CD8-positive, alpha-beta T cell (primary cell): ENCODE measurements at regions of chr12 and their contacts with region 1.

Region 1: DNA sequence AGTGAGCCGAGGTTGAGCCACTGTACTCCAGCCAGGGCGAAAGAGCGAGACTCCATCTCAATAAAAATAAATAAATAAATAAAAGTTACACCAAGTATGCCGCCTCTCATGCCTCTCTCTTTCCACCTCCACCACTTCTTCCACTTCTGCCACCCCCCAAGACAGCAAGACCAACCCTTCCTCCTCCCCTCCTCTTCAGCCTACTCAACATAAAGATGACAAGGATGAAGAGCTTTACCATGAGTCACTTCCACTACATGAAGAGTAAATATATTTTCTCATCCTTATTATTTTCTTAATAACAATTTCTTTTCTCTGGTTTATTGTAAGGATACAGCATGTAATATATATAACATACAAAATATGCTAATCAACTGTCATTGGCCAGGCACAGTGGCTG is 3.6 kb upstream of the TMED2 start:
- DNase-seq: no peak
- ATAC-seq: no peak
- H3K4me3 ChIP-seq: no peak overlapping the region
- H3K4me3 Mint-ChIP-seq: no peak overlapping the region
- H3K27ac ChIP-seq: no peak overlapping the region
- H3K27ac Mint-ChIP-seq: no peak overlapping the region
- H3K4me1 ChIP-seq: peaks cover 22% of the 10 kb centered on the region
- H3K4me1 Mint-ChIP-seq: peaks cover 28% of the 10 kb centered on the region
- H3K27me3 ChIP-seq: no peaks in the 10 kb centered on the region
- H3K27me3 Mint-ChIP-seq: no peaks in the 10 kb centered on the region
- CTCF ChIP-seq: no peak

Region 2: GRCh38 chr12:123264681-123265438 is 315.9 kb before region 1 on chr12:
- CTCF ChIA-PET with region 1: interaction called, 14 read pairs
- POLR2A ChIA-PET with region 1: interaction called, 5 read pairs
- intact Hi-C with region 1: loop called in 1 of 2 experiments (anchors 1 kb)
- DNase-seq: peak in 2 of 9 experiments; percentile 29 to 33
- ATAC-seq: no peak
- H3K4me3 ChIP-seq: no peak overlapping the region
- H3K4me3 Mint-ChIP-seq: no peak overlapping the region
- H3K27ac ChIP-seq: no peak overlapping the region
- H3K27ac Mint-ChIP-seq: no peak overlapping the region
- H3K4me1 ChIP-seq: peaks cover 12% of the 10 kb centered on the region
- H3K4me1 Mint-ChIP-seq: peaks cover 19% of the 10 kb centered on the region
- H3K27me3 ChIP-seq: no peaks in the 10 kb centered on the region
- H3K27me3 Mint-ChIP-seq: no peaks in the 10 kb centered on the region
- CTCF ChIP-seq: no peak

Region 3: GRCh38 chr12:123382684-123383083 is 198.1 kb before region 1 on chr12:
- CTCF ChIA-PET with region 1: interaction called, 3 read pairs
- POLR2A ChIA-PET with region 1: interaction called, 4 read pairs
- intact Hi-C with region 1: loop called in 1 of 2 experiments (anchors 1 kb)
- DNase-seq: no peak
- ATAC-seq: no peak
- H3K4me3 ChIP-seq: no peak overlapping the region
- H3K4me3 Mint-ChIP-seq: peak overlapping the region; percentile 49
- H3K27ac ChIP-seq: no peak overlapping the region
- H3K27ac Mint-ChIP-seq: no peak overlapping the region
- H3K4me1 ChIP-seq: peaks cover 10% of the 10 kb centered on the region
- H3K4me1 Mint-ChIP-seq: peaks cover 12% of the 10 kb centered on the region
- H3K27me3 ChIP-seq: no peaks in the 10 kb centered on the region
- H3K27me3 Mint-ChIP-seq: no peaks in the 10 kb centered on the region
- CTCF ChIP-seq: no peak

Region 4: GRCh38 chr12:123436017-123436964 is 144.5 kb before region 1 on chr12 and contains the start of gene RILPL2:
- CTCF ChIA-PET with region 1: interaction called, 3 read pairs
- POLR2A ChIA-PET with region 1: interaction called, 3 read pairs
- intact Hi-C with region 1: loop called in 1 of 2 experiments (anchors 1 kb)
- DNase-seq: peak; percentile 77 to 95 (median 90)
- ATAC-seq: peak; percentile 89
- H3K4me3 ChIP-seq: peak within 1 kb of the TSS; percentile 84 to 97
- H3K4me3 Mint-ChIP-seq: peak within 1 kb of the TSS; percentile 93
- H3K27ac ChIP-seq: peak within 1 kb of the TSS; percentile 60 to 93
- H3K27ac Mint-ChIP-seq: peak within 1 kb of the TSS; percentile 90
- H3K4me1 ChIP-seq: peaks cover 35% of the 10 kb centered on the region
- H3K4me1 Mint-ChIP-seq: peaks cover 38% of the 10 kb centered on the region
- H3K27me3 ChIP-seq: no peaks in the 10 kb centered on the region
- H3K27me3 Mint-ChIP-seq: no peaks in the 10 kb centered on the region
- CTCF ChIP-seq: no peak
- total RNA-seq, gene RILPL2: 3.4 to 3.6 TPM

Region 5: DNA sequence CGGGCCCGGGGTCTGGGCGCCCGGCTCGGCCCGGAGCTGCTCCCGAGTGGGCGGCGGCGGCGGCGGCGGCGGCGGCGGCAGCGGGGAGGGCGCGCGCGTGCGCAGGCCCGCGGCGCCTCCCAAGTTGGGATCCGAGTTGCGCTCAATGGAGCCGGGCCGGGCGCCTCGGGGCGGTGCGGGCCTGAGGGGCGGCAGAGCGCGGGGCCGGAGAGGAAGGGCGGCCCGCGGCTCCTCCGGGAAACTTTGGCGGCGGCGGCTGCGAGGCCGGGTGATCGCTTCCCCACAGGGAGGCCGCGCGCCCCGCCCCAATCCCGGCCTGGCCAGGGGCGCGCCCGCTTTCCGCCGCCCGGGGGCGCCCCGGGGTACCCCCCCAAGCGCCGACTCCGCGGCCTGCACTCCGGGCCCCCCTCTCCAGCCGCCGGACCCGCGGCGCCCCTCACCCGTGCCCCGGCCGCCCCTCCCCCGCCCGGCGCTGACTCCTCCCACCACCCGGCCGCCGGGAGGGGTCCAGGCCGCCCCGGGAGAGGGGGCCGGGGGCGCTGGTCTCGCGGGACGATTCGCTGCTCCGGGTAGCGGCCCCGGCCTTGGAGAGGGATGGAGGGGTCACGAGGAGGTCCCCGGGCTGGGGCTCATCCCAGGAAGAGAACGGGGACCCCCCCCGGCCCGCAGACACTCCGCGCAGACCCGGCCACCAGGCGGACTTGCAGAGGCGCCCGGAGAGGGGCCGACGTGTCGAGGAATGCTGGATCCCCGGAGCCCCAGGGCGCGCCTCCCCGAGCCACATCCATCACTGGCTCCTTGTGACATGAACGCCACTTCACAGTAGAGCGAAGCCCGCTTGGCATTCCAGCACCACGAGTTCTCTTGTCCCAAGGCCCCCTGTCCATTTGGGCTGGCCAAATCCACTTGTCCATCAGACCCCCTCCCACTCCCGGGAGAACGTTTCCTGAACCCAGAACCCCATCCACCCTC is 46.8 kb before region 1 on chr12 and contains the start of gene RILPL1:
- CTCF ChIA-PET with region 1: interaction called, 3 read pairs
- POLR2A ChIA-PET with region 1: no interaction called
- intact Hi-C with region 1: loop called (anchors 2 to 5 kb)
- DNase-seq: peak; percentile 7 to 71 (median 43)
- ATAC-seq: peak; percentile 82
- H3K4me3 ChIP-seq: peak within 1 kb of the TSS; percentile 61 to 68
- H3K4me3 Mint-ChIP-seq: peak within 1 kb of the TSS; percentile 89
- H3K27ac ChIP-seq: no peak within 1 kb of the TSS
- H3K27ac Mint-ChIP-seq: peak within 1 kb of the TSS; percentile 74
- H3K4me1 ChIP-seq: peaks cover 19% of the 10 kb centered on the region
- H3K4me1 Mint-ChIP-seq: peaks cover 17% of the 10 kb centered on the region
- H3K27me3 ChIP-seq: no peaks in the 10 kb centered on the region
- H3K27me3 Mint-ChIP-seq: no peaks in the 10 kb centered on the region
- CTCF ChIP-seq: peak; percentile 27
- total RNA-seq, gene RILPL1: 3.1 to 3.4 TPM

Region 6: DNA sequence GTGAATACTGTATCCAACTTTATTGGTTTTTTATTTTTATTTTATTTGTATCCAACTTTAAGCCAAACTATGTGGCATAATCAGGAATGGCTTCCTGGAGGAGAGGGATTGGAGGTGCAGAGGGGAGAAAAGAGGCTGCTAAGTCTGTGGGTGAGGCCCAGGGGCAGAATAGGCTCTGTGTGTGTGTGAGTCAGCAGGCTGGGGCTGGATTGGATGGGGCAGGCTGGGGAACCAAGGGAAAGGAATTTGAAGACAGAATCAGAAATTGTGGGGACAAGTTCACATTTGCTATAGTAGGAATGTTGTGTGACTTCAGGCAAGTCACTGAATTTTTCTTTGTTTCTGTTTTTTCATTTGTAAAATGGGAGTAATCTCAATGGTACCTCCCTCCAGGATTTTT is 34.5 kb before region 1 on chr12:
- CTCF ChIA-PET with region 1: no interaction called
- POLR2A ChIA-PET with region 1: no interaction called
- intact Hi-C with region 1: no loop called
- DNase-seq: no peak
- ATAC-seq: no peak
- H3K4me3 ChIP-seq: no peak overlapping the region
- H3K4me3 Mint-ChIP-seq: no peak overlapping the region
- H3K27ac ChIP-seq: no peak overlapping the region
- H3K27ac Mint-ChIP-seq: no peak overlapping the region
- H3K4me1 ChIP-seq: no peaks in the 10 kb centered on the region
- H3K4me1 Mint-ChIP-seq: no peaks in the 10 kb centered on the region
- H3K27me3 ChIP-seq: no peaks in the 10 kb centered on the region
- H3K27me3 Mint-ChIP-seq: peaks cover 9% of the 10 kb centered on the region
- CTCF ChIP-seq: no peak

Region 7: DNA sequence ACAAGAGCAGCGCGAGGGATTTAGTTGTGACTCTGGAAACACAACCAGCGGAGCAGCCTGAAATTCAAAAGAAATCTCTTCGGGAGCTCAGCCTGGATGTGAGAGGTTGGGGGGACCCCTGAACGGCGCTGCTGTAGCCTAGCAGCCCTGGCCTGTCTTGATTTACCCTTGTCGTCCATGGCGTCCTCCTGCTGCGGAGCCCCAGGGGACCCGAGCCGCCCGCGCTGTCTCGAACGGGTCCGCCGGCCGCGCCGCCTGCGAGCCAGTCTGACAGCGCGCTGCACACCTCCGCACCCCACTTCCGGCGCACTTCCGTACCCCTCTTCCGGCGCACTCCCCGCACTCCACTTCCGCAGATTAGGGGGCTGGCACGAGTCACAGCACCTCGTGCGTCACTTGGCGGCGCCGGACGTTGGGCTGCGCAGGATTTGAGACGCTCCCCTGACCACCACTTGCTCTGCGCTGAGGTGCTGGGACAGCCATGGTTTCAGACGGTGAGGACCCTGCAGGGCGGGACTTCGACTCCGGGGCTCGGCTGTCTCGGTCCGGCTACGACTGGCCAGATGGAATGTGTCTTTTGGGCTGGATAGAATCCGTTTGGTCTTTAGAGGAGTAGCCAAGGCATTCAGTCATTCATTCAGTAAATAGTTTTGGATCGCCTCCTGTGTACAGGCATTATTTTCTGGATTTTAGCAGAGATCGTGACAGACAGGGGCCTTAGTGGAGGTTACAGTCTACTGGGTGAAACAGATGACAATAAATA is 52.8 kb after region 1 on chr12 and contains the starts of genes EIF2B1 and GTF2H3:
- CTCF ChIA-PET with region 1: interaction called, 3 read pairs
- POLR2A ChIA-PET with region 1: no interaction called
- intact Hi-C with region 1: loop called (anchors 1 kb)
- DNase-seq: peak; percentile 88 to 99 (median 97)
- ATAC-seq: peak; percentile 94
- H3K4me3 ChIP-seq: peak within 1 kb of the TSS; percentile 77 to 79
- H3K4me3 Mint-ChIP-seq: peak within 1 kb of the TSS; percentile 92
- H3K27ac ChIP-seq: peak within 1 kb of the TSS; percentile 90 to 93
- H3K27ac Mint-ChIP-seq: peak within 1 kb of the TSS; percentile 98
- H3K4me1 ChIP-seq: peaks cover 21% of the 10 kb centered on the region
- H3K4me1 Mint-ChIP-seq: peaks cover 42% of the 10 kb centered on the region
- H3K27me3 ChIP-seq: no peaks in the 10 kb centered on the region
- H3K27me3 Mint-ChIP-seq: no peaks in the 10 kb centered on the region
- CTCF ChIP-seq: no peak
- total RNA-seq, gene EIF2B1: 35.9 to 40.0 TPM
- total RNA-seq, gene GTF2H3: 11.8 to 15.2 TPM